ENCODE measurements at regions of chr3 and their contacts with region 1.

Region 1: DNA sequence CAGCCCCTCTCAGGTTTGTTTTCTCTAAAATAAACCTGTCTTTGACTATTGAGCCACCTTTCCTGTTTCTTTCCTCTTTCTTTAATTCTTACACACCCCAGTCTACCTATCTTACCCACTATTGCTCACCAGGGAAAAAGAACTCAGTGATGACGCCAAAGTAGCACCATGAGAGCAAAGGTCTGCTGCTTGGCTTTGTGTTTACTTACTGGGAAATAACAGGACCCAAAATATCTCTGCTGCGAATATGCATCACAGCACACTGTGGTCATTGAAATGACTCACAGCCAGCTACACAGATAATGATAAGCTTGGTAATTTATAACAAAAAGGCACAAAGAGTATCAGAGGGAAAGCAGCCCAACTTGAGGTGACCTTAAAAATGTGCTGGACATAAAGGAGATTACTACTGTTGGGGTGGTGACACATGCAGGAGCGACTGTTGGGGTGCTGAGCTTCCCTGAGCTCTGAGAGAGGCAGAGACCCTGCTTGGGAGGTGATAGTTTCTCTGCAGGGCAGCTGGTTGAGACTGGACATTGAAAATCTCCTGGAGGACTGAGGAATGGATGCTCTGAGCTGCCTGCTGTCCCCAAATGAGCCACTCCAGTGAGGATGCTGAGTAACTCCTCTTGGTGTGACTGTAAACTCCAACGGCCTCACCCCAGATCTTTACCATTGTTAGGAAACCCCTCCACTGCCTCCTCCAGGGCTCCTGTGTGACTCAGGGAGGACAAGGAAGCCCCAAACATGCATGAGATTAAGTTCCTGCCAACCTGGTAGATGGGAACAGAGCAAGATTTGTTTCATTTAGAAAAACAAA is 14.5 kb downstream of the EFCAB12 start:
- DNase-seq: peak; percentile 91
- ATAC-seq: peak; percentile 77
- H3K4me3 ChIP-seq: peak overlapping the region in 1 of 3 experiments; percentile 49; a peak in 2 of 6 replicates
- H3K27ac ChIP-seq: peak overlapping the region; percentile 72
- H3K4me1 ChIP-seq: peaks cover 73% of the 10 kb centered on the region
- H3K27me3 ChIP-seq: no peaks in the 10 kb centered on the region
- CTCF ChIP-seq: no peak
- EP300 ChIP-seq: peak in 1 of 2 experiments; percentile 59; a peak in 1 of 4 replicates
- POLR2A ChIP-seq: no peak
- RAD21 ChIP-seq: no peak

Region 2: DNA sequence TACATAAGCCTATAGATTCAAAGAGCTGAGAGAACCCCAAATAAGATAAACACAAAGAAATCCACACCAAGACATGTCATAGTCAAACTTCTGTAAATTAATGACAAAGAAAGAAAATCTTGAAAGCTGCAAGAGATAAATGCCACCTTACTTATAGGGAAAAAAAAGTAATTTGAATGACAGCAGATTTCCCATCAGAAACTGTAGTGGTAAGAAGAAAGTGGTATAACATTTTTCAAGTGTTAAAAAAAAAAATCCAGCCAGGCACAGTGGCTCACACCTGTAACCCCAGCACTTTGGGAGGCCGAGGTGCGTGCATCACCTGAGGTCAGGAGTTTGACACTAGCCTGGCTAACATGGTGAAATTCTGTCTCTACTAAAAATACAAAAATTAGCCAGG is 457.5 kb before region 1 on chr3:
- CTCF ChIA-PET with region 1: no interaction called
- POLR2A ChIA-PET with region 1: no interaction called
- in situ Hi-C with region 1: no loop called
- intact Hi-C with region 1: loop called (anchors 5 kb)
- DNase-seq: no peak
- ATAC-seq: no peak
- H3K4me3 ChIP-seq: no peak overlapping the region
- H3K27ac ChIP-seq: no peak overlapping the region
- H3K4me1 ChIP-seq: no peaks in the 10 kb centered on the region
- H3K27me3 ChIP-seq: peaks cover 0 to 5% of the 10 kb centered on the region in 2 experiments; a peak in 2 of 5 replicates
- CTCF ChIP-seq: no peak
- EP300 ChIP-seq: no peak
- POLR2A ChIP-seq: no peak
- RAD21 ChIP-seq: no peak

Region 3: DNA sequence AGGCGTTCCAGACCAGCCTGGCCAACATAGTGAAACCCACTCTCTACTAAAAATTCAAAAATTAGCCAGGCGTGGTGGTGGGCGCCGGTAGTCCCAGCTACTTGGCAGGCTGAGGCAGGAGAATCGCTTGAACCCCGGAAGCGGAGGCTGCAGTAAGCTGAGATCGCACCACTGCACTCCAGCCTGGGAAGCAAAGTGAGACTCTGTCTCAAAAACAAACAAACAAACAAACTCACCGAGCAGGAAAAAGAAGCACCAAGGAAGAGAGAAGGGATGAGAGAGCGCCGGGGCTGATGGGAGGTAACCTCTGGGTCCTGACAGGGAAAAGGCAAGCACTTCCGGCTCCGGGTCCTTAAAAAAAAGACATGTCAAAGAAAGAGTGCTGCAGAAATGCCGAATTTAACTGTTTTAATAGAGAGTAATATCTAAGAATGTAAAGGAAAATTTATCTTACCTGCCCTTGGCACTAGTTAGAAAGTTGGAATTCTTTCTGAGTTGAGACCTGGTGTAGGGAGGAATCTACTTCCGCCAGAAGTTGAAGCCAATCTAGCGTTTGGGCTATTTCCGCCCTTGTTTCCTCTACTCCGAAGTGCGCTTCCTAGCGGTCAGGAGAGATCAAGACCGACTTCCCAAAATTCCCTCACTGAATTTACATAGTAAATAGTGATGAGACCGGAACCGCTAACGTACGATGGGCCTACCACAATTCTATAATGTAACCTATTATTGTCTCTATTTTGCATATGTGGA is 14.6 kb before region 1 on chr3:
- CTCF ChIA-PET with region 1: no interaction called
- POLR2A ChIA-PET with region 1: interaction called, 9 read pairs
- in situ Hi-C with region 1: no loop called
- intact Hi-C with region 1: loop called (anchors 1 kb)
- DNase-seq: peak; percentile 95
- ATAC-seq: peak; percentile 74
- H3K4me3 ChIP-seq: peak overlapping the region; percentile 61 to 86 (median 85)
- H3K27ac ChIP-seq: peak overlapping the region; percentile 87
- H3K4me1 ChIP-seq: peaks cover 75% of the 10 kb centered on the region
- H3K27me3 ChIP-seq: no peaks in the 10 kb centered on the region; a peak in 1 of 5 replicates
- CTCF ChIP-seq: peak; percentile 84
- EP300 ChIP-seq: peak in 1 of 2 experiments; percentile 100; a peak in 1 of 4 replicates
- POLR2A ChIP-seq: no peak
- RAD21 ChIP-seq: peak; percentile 23; the same call in 1 of the 2 replicates

Region 4: DNA sequence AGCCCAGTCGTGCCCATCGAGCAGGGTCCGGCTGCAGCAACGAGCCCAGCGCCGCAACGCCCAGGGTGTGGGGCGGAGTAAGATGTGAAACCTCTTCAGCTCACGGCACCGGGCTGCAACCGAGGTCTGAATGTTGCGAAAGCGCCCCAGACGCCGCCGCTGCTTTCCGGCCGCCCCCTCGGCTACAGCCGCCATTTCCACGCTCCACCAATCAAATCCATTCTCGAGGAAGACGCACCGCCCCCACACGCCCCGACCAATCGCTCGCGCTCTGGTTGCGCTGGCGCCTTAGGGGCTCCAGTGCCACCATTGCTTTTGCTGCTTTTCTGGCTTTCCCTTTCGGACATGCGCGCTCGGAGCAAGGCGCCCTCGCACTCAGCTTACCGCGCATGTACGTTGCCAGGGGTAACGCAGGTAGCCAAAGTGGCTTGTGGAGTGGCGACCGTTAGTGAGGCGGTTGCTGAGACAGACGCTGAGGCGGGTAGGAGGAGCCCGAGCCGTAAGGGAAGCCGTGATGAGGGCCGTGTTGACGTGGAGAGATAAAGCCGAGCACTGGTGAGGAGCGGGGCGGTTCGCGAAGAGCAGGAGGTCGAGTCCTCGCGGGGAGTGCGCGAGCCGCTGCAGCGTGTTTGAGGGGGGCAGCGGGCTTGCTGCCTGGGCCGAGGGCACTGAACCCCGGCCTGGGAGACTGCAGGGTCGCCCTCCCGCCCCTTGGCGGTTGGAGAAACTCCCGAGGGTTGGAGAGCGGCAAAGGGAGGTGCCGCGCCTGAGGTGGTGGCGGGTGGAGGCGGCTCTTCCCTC is 26.1 kb after region 1 on chr3 and contains the starts of genes IFT122 and MBD4:
- CTCF ChIA-PET with region 1: no interaction called
- POLR2A ChIA-PET with region 1: interaction called, 15 read pairs
- in situ Hi-C with region 1: no loop called
- intact Hi-C with region 1: no loop called
- DNase-seq: peak; percentile 97
- ATAC-seq: peak; percentile 96
- H3K4me3 ChIP-seq: peak within 1 kb of the TSS; percentile 86 to 96 (median 90)
- H3K27ac ChIP-seq: peak within 1 kb of the TSS; percentile 75
- H3K4me1 ChIP-seq: peaks cover 55% of the 10 kb centered on the region
- H3K27me3 ChIP-seq: no peaks in the 10 kb centered on the region; a peak in 1 of 5 replicates
- CTCF ChIP-seq: no peak
- EP300 ChIP-seq: 0 out of 4 replicates have a peak, but pooled peaks of 1 of the 2 experiments have one; percentile 14
- POLR2A ChIP-seq: peak; percentile 64 to 69
- RAD21 ChIP-seq: 0 out of 2 replicates have a peak, but pooled peaks have one; percentile 34
- total RNA-seq, gene IFT122: 10.3 and 10.8 TPM in 2 replicates
- total RNA-seq, gene MBD4: 25.3 and 26.9 TPM in 2 replicates